ENCODE measurements at regions of chr12 and their contacts with region 1.

Region 1: GRCh38 chr12:48936379-48936979 is 11.2 kb upstream of the FKBP11 start:
- DNase-seq: peak; percentile 17
- H3K4me3 ChIP-seq: no peak overlapping the region
- H3K27ac ChIP-seq: no peak overlapping the region
- H3K4me1 ChIP-seq: no peaks in the 10 kb centered on the region
- H3K27me3 ChIP-seq: no peaks in the 10 kb centered on the region
- CTCF ChIP-seq: peak; percentile 93 to 94

Region 2: DNA sequence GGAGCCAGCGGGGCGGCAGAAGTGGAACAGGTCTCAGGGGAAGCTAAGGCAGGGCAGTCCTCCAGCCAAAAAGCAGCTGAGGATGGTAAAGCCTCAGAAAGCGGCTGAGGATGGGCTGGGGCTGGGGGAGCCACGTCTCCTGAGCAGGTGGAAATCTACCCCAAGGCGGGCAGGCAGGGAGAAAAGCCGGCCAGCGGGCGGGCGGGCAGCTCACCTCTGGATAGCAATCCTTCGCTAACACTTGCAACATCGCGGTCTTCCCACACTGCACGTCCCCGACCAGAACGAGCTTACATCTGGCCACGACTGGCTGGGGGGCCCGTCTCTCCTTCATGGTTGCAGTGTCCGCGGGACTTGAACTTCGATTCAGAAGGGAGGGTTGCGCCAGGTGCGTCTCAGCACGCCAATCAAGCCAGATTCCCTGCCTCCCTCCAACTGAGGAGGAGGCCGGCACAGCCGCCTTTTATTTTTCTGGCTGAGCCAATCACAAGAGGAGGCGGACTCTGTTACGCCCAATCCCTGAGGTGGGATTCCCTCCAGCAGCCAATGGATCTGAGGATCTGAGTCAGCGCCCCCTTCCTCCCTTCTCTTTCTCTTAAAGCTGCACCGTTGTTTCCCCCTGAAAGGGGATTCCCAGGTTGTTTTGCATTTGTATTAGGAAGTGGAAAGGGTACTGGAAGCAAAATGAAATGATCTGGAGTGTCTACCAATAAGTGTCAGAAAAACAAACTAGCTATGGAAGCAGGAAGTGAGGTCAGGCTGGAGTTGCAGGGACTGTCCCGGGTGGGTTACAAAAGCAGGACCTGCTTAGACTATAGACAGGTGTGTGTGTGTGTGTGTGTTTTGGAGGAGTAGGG is 70.8 kb before region 1 on chr12 and contains the start of gene RND1:
- CTCF ChIA-PET with region 1: no interaction called
- dilution Hi-C with region 1: loop called (anchors 5 kb)
- in situ Hi-C with region 1: loop called in 1 of 2 experiments (anchors 10 kb)
- intact Hi-C with region 1: no loop called
- DNase-seq: peak; percentile 91
- H3K4me3 ChIP-seq: peak within 1 kb of the TSS; percentile 54 to 73 (median 56)
- H3K27ac ChIP-seq: peak within 1 kb of the TSS; percentile 14
- H3K4me1 ChIP-seq: peaks cover 13% of the 10 kb centered on the region
- H3K27me3 ChIP-seq: no peaks in the 10 kb centered on the region
- CTCF ChIP-seq: peak in 1 of 2 donors; percentile 8
- total RNA-seq, gene RND1: 0.17 to 0.68 TPM

Region 3: DNA sequence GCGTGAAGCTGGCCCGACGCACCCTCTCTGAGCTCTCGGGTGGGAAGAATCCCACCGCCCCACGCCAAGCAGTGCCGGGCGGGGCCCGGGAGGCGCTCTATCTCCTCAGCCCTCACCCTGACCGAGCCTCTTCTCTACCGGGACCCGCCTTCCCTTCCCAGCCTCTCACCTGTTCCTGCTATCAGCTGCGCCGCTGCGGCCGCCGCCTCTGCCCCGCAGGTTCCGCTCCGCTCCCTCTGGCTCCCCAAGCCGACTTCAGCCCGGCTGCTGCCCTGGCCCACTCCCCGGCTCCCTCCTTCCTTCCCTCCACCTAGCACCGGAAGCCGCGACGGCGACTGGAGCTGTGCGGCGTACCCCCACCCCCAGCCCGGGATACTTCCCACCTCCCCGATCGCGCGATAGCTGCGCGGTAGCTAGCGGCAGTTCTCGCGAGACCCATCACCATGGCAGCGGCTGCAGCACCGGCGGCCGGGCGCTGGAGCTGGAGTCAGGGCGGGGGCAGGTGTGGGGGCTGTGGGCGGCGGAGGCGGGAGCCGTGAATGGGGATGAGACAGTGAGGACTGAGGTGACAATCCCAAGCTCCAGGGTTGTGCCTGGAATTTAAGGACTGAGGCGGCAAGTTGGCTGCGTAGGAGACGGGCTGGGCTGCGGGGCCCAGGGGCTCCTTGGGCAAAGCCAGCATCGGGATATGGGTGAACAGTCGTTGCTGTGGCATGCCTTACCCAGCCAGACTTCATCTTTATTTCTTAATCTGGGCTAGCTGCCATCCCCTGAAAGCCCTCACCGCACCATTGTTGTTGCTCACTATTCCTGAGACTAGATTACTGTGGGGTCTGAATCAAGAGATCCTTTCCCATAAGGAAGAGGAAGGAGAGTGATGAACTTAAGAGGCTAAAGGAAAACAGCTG is 20.9 kb after region 1 on chr12 and contains the start of gene ARF3:
- CTCF ChIA-PET with region 1: interaction called, 12 read pairs
- dilution Hi-C with region 1: no loop called
- in situ Hi-C with region 1: no loop called
- intact Hi-C with region 1: no loop called
- DNase-seq: peak; percentile 88
- H3K4me3 ChIP-seq: peak within 1 kb of the TSS; percentile 82 to 97 (median 96)
- H3K27ac ChIP-seq: peak within 1 kb of the TSS; percentile 78
- H3K4me1 ChIP-seq: peaks cover 28% of the 10 kb centered on the region
- H3K27me3 ChIP-seq: no peaks in the 10 kb centered on the region
- CTCF ChIP-seq: no peak
- total RNA-seq, gene ARF3: 87.9 to 201 TPM

Region 4: DNA sequence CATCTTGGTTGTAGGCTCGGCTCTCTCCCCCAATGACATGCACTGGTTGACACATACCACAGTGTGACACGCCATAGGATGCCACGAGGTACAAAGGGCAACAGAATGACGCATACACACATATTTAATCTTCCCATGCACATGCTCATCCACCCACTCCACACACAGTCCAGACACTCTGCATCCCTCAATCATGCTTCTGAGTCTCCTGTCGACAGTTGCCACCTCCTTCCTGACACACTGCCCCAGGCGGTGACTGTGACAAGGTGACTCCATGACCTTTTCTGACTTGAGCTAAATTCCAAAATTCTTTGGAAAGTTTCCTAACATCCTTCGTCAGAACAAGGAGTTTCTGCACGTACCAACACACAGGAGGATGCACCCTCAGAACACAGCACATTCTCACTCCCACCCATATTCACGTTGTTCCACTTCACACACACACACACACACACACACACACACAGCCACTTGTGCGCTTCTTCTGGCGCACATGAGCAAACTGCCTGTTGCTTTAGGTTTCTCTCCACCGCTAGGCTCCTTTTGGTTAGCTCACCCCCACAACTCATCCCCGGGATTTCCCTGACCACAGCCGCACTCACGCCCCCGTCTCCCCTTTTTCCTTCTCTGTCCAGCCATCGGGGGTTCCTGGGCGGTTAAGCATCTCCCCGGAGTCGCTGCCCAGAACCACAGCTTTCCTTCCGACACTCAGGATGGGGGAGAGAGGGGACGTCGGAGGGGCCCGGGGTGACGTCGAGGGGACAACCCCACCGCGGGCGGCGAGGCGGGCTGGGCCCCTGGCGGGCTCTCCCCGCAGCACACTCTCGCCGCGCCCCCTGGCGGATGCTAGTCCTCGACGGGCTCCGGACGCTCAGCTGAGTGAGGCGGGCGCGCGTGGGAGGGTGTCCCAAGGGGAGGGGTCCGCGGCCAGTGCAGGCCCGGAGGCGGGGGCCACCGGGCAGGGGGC is 41.1 kb after region 1 on chr12:
- CTCF ChIA-PET with region 1: no interaction called
- dilution Hi-C with region 1: no loop called
- in situ Hi-C with region 1: no loop called
- intact Hi-C with region 1: loop called (anchors 2 kb)
- DNase-seq: peak; percentile 35
- H3K4me3 ChIP-seq: no peak overlapping the region
- H3K27ac ChIP-seq: no peak overlapping the region
- H3K4me1 ChIP-seq: peaks cover 36% of the 10 kb centered on the region
- H3K27me3 ChIP-seq: peaks cover 41% of the 10 kb centered on the region
- CTCF ChIP-seq: peak; percentile 50 to 83

Region 5: GRCh38 chr12:48995061-48995879 is 58.8 kb after region 1 on chr12:
- CTCF ChIA-PET with region 1: no interaction called
- dilution Hi-C with region 1: no loop called
- in situ Hi-C with region 1: no loop called
- intact Hi-C with region 1: loop called (anchors 2 kb)
- DNase-seq: peak; percentile 63
- H3K4me3 ChIP-seq: peak overlapping the region in 2 of 3 experiments; percentile 21 to 26
- H3K27ac ChIP-seq: no peak overlapping the region
- H3K4me1 ChIP-seq: peaks cover 17% of the 10 kb centered on the region
- H3K27me3 ChIP-seq: no peaks in the 10 kb centered on the region
- CTCF ChIP-seq: peak; percentile 72 to 85

Region 6: GRCh38 chr12:49138587-49138986 is 202.1 kb after region 1 on chr12:
- CTCF ChIA-PET with region 1: no interaction called
- dilution Hi-C with region 1: no loop called
- in situ Hi-C with region 1: no loop called
- intact Hi-C with region 1: no loop called
- DNase-seq: no peak
- H3K4me3 ChIP-seq: no peak overlapping the region
- H3K27ac ChIP-seq: no peak overlapping the region
- H3K4me1 ChIP-seq: peaks cover 3% of the 10 kb centered on the region
- H3K27me3 ChIP-seq: no peaks in the 10 kb centered on the region
- CTCF ChIP-seq: no peak

Measured in mammary epithelial cell (primary cell).